PC-9 (cell line): ENCODE measurements at regions of chr15 and their contacts with region 1.

Region 1: GRCh38 chr15:66803182-66803729 is 101.2 kb downstream of the SMAD6 start:
- DNase-seq: peak; percentile 93 to 96
- H3K4me3 ChIP-seq: no peak overlapping the region; the same call in 1 of the 2 replicates
- H3K27ac ChIP-seq: peak overlapping the region; percentile 94
- H3K4me1 ChIP-seq: peaks cover 70% of the 10 kb centered on the region
- H3K27me3 ChIP-seq: no peaks in the 10 kb centered on the region
- CTCF ChIP-seq: no peak

Region 2: DNA sequence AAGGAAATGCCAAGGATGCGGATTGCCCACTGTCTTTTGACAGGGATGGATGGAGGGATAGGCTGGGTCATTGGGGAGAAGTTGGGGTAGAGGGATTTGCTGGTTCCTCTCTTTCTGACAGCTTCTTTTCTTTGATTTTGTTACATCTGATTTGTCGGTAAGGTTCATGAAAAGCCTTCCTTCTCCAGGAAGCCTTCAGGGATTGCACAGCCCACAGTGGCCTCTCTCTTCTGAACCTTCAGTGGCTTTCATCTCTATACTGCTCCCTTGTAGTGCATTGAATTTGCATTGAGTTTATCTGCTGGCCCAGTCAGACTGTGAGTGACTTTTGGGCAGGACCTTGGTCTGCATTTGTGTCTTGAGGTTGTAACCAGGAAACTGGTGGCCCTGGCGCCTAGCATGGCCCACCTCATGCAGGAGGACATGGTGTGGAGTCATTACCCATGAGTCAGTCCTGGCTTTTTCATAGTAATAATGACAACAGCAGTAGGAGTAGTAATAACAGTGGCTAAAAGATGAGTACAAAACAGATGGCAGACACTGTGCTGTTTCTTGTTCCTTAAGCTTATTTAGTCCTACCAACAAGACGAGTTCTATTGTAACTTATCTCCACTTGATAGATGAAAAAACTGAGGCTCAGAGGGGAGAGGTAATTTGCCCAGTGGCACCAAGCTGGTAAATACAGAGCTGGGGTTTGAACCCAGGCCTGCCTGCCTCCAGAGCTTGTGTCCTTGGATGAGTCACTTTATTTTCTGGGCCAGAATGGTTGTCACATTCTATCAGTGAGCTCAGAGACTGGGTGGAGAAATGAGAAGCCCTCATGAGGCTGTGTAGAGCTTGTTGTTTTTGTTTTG is 72.9 kb before region 1 on chr15:
- CTCF ChIA-PET with region 1: no interaction called
- POLR2A ChIA-PET with region 1: no interaction called
- intact Hi-C with region 1: no loop called
- DNase-seq: peak in 1 of 2 experiments; percentile 46
- H3K4me3 ChIP-seq: no peak overlapping the region
- H3K27ac ChIP-seq: no peak overlapping the region
- H3K4me1 ChIP-seq: peaks cover 7% of the 10 kb centered on the region; the same call in 1 of the 2 replicates
- H3K27me3 ChIP-seq: no peaks in the 10 kb centered on the region
- CTCF ChIP-seq: no peak

Region 3: GRCh38 chr15:66841953-66842681 is 38.9 kb after region 1 on chr15:
- CTCF ChIA-PET with region 1: interaction called, 3 read pairs
- POLR2A ChIA-PET with region 1: no interaction called
- intact Hi-C with region 1: loop called (anchors 2 kb)
- DNase-seq: peak; percentile 77 to 92
- H3K4me3 ChIP-seq: peak overlapping the region; percentile 46; the same call in 1 of the 2 replicates
- H3K27ac ChIP-seq: peak overlapping the region; percentile 81
- H3K4me1 ChIP-seq: peaks cover 29% of the 10 kb centered on the region
- H3K27me3 ChIP-seq: no peaks in the 10 kb centered on the region
- CTCF ChIP-seq: no peak